ENCODE measurements at regions of chr6 and their contacts with region 1.

Region 1: GRCh38 chr6:41602864-41603608 is 35.2 kb upstream of the MDFI start:
- DNase-seq: peak; percentile 82
- H3K4me3 Mint-ChIP-seq: peak overlapping the region; percentile 8
- H3K27ac Mint-ChIP-seq: no peak overlapping the region
- H3K4me1 Mint-ChIP-seq: peaks cover 4% of the 10 kb centered on the region
- H3K27me3 Mint-ChIP-seq: peaks cover 1% of the 10 kb centered on the region

Region 2: GRCh38 chr6:41367700-41368099 is 235.3 kb before region 1 on chr6:
- CTCF ChIA-PET with region 1: interaction called, 8 read pairs
- POLR2A ChIA-PET with region 1: no interaction called
- intact Hi-C with region 1: loop called (anchors 1 kb)
- DNase-seq: peak; percentile 25
- H3K4me3 Mint-ChIP-seq: no peak overlapping the region
- H3K27ac Mint-ChIP-seq: no peak overlapping the region
- H3K4me1 Mint-ChIP-seq: peaks cover 15% of the 10 kb centered on the region
- H3K27me3 Mint-ChIP-seq: peaks cover 49% of the 10 kb centered on the region

Region 3: DNA sequence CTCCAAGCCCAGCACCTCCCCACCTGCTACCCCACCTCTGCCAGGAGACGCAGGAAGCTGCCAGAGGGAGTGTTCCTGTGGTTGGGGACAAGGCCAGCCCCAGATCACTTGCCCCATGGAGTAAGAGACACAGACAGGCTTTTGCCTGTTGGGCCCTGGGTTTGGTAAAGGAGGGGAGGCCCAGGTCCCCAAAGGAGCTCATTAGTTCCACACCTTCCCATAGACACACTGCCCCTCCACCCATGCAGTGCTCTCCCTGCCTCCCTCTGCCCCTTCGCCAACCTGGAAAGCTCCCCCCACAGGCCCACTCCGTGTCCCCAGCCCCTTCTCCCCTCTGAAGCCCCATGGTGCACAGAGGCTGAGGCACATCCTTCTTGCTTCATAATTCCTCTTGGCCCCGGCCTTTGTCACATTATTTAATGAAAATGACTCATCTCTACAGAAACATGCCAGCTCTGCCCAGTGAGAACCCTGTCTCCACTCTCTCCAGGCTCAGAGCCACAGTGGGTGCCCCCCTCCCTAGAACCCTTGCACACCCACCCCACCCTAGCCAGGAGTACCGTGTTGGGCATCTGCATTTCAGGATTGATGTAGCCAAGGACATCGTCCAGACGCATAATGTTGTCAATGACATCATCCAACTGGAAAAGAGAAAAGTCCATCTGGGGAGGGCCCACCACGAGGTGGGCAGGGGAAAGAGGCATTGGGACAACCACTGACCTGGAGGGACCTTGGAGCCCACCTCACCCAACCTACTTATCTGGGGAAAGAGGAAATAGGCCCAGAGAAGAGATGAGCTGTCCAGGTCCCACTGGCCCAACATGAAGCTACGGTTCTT is 86.4 kb after region 1 on chr6:
- CTCF ChIA-PET with region 1: interaction called, 90 read pairs
- POLR2A ChIA-PET with region 1: no interaction called
- intact Hi-C with region 1: no loop called
- DNase-seq: no peak
- H3K4me3 Mint-ChIP-seq: no peak overlapping the region
- H3K27ac Mint-ChIP-seq: no peak overlapping the region
- H3K4me1 Mint-ChIP-seq: peaks cover 2% of the 10 kb centered on the region
- H3K27me3 Mint-ChIP-seq: no peaks in the 10 kb centered on the region

Region 4: GRCh38 chr6:41779793-41780545 is 176.9 kb after region 1 on chr6 and contains the start of gene FRS3:
- CTCF ChIA-PET with region 1: interaction called, 8 read pairs
- POLR2A ChIA-PET with region 1: no interaction called
- intact Hi-C with region 1: loop called (anchors 1 kb)
- DNase-seq: peak; percentile 99
- H3K4me3 Mint-ChIP-seq: peak within 1 kb of the TSS; percentile 85
- H3K27ac Mint-ChIP-seq: peak within 1 kb of the TSS; percentile 38
- H3K4me1 Mint-ChIP-seq: peaks cover 13% of the 10 kb centered on the region
- H3K27me3 Mint-ChIP-seq: peaks cover 6% of the 10 kb centered on the region
- total RNA-seq, gene FRS3: 4.8 to 5.5 TPM

Measured in activated CD4-positive, alpha-beta memory T cell treated with anti-CD3 and anti-CD28 coated beads for 36 hours (primary cell).